Posterior vena cava (tissue), 2 donors: ENCODE measurements at regions of chr11 and their contacts with region 1.

Region 1: DNA sequence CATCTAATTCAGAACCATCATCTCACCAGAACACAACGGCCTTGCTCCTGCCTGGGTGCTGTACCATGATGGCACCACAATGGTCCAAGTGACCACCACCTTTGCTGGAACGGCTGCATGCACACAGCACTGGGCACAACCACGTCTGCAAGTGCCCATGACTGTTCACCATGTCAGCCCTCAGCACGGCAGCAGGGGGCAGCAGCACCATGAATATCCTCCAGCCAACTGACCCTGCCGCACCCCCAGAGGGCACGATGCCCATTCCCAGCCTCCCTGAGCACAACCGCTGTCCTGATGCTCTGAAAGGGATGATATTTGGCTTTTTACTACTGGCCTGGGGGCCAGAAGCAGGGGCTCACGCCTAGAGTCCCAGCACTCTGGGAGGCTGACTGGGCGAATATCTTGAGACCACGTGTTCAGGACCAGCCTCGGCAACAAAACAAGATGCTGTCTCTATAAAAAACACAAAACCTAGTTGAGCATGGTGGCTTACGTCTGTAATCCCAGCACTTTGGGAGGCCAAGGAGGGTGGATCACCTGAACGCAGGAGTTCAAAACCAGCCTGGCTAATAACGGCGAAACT is 25.7 kb downstream of the DRD4 start:
- DNase-seq: peak; percentile 92

Region 2: GRCh38 chr11:587978-588380 is 74.8 kb before region 1 on chr11:
- intact Hi-C with region 1: no loop called
- DNase-seq: peak; percentile 88

Region 3: GRCh38 chr11:690738-691633 is 28.2 kb after region 1 on chr11:
- intact Hi-C with region 1: no loop called
- DNase-seq: no peak

Region 4: DNA sequence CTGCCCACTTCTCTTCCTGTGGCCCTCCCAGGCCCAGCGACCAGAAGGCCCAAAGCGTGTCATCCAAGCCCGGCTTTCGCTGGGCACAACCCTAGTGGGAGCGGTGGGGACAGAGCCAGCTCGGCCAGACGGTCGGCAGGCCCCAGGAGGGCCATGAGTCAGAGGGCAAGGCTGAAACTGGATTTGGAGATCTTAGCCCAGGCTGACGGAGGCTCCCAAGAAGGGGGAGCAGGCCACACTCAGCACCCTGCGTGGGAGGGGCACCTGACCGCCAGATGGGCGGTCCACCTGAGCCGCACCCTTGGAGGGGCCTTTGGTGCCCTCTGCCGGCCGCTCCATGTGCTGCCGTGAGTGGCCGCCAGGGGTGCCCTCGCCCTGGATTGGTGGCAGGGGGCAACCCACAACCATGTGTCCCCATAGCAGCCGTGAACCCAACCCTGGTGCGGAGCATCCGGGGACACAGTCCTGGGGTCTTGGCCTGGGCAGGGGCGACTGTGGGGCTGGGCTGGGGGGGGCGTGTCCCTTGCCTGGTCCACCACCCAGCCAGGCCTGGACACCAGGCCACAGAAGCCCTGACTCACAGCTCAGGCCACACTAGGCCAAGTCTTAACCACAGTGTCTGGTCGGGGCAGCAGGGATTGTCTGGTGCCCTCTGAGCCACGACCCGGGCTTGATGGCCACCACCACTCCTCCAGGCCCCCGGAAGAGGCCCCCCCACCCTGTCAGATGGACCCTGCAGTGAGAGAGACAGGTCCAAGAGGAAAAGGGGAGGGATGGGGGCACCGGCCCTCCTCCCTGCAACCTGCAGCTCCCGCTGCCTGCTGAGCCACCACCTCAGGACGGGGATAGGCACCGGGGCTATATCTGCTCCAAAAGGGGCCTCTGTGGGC is 65.3 kb after region 1 on chr11:
- intact Hi-C with region 1: loop called (anchors 5 to 10 kb)
- DNase-seq: peak; percentile 96

Region 5: GRCh38 chr11:798093-798713 is 135.4 kb after region 1 on chr11 and contains the start of gene SLC25A22:
- intact Hi-C with region 1: loop called in 1 of 2 experiments (anchors 10 kb)
- DNase-seq: peak; percentile 92
- total RNA-seq, gene SLC25A22: 10.6 to 11.2 TPM